AG04450 (cell line): ENCODE measurements at regions of chr11 and their contacts with region 1.

Region 1: DNA sequence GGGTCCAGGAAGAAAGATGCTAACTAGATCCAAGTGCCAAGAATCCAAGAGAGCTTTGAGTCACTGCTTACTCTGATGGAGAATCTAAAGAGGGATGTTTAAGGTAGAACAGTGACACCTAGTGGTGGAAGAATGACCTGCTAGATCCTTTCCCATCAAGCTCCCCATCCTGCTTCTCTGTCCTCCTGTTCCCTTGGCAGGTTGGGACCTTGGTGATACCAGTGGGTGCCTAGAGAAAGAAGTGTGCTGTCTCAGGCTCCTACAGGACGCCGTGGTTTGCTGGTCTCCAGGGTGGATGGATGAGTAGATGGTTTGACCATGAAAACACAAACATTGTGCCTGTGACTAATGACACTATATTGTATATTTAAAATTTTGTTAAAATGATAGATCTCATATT is 383.7 kb downstream of the TMEM135 start:
- DNase-seq: peak; percentile 66
- H3K4me3 ChIP-seq: no peak overlapping the region
- H3K27ac ChIP-seq: no peak overlapping the region
- H3K27me3 ChIP-seq: no peaks in the 10 kb centered on the region
- CTCF ChIP-seq: peak; percentile 76

Region 2: DNA sequence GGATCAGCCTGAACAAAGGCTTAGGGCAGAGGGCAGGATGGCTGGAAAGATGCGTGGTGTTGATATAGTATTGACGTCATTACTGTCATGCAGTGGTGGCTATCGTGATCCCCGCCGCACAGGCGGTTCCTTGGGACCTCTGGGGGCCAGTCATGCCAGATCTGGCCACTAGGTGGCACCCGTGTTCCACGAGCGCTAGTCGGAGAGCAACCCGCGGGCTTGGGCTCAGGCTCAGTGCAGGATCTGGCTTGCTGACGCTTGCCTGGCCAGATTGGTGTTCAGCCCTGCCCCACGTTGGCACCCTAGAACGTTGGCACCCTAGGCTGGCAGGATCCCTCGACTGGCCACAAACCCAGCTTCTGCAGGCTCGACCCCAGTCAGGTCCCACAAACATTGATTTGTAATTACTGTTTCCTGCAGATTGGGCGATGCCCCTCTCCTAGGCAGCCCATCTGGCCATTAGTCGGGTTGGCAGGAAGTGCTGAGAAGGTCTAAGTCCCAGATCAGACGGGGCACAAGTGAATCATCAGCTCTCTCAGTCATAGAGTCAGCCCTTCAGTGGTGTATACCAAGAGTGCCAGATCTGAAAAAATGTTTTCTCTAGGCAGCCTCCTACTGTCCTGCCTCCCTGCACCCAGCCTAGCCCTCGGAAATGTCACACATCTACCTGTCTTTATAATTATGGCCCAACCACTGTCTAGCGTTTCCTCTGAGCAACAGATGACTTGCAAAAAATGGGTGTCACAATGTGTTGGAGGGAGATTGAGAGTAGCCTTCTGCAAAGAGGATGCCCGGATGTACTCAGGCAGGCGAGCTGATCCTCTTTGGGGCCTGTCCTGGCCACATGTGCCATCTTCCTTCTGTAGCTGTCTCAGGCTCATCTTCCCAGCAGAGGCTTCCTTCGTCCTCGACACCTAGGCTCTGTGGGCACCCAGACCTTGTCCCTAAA is 68.4 kb before region 1 on chr11:
- CTCF ChIA-PET with region 1: interaction called, 106 read pairs
- POLR2A ChIA-PET with region 1: no interaction called
- DNase-seq: peak; percentile 32
- H3K4me3 ChIP-seq: no peak overlapping the region
- H3K27ac ChIP-seq: no peak overlapping the region
- H3K27me3 ChIP-seq: peaks cover 2% of the 10 kb centered on the region
- CTCF ChIP-seq: peak; percentile 99

Region 3: DNA sequence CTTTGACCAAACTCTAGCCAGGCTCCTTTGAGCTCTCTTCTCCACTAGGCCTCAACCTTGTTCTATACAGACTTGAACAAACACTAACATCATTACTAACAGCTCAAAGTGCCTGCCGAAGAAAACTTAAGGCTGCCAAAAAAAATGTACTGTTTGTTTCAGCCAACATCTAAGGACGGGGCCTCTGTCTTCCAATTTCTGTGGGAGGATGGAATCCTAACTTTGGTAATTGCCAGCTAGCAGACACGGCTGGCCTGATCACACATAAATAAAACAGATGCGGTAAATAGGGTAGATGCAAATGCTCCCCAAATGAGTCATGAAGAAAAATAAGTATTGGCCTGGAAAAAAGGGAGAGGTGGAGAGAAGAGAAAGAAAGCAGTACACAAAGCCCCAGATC is 10.6 kb after region 1 on chr11:
- CTCF ChIA-PET with region 1: interaction called, 32 read pairs
- POLR2A ChIA-PET with region 1: no interaction called
- DNase-seq: peak; percentile 55
- H3K4me3 ChIP-seq: no peak overlapping the region
- H3K27ac ChIP-seq: peak overlapping the region; percentile 49
- H3K27me3 ChIP-seq: no peaks in the 10 kb centered on the region
- CTCF ChIP-seq: no peak

Region 4: GRCh38 chr11:87451395-87451794 is 30.0 kb after region 1 on chr11:
- CTCF ChIA-PET with region 1: interaction called, 18 read pairs
- POLR2A ChIA-PET with region 1: no interaction called
- DNase-seq: no peak
- H3K4me3 ChIP-seq: no peak overlapping the region
- H3K27ac ChIP-seq: no peak overlapping the region
- H3K27me3 ChIP-seq: no peaks in the 10 kb centered on the region
- CTCF ChIP-seq: no peak

Region 5: GRCh38 chr11:87518266-87518665 is 96.8 kb after region 1 on chr11:
- CTCF ChIA-PET with region 1: no interaction called
- POLR2A ChIA-PET with region 1: no interaction called
- DNase-seq: no peak
- H3K4me3 ChIP-seq: no peak overlapping the region
- H3K27ac ChIP-seq: no peak overlapping the region
- H3K27me3 ChIP-seq: peaks cover 2% of the 10 kb centered on the region
- CTCF ChIP-seq: no peak

Region 6: GRCh38 chr11:87870086-87870485 is 448.7 kb after region 1 on chr11:
- CTCF ChIA-PET with region 1: no interaction called
- POLR2A ChIA-PET with region 1: no interaction called
- DNase-seq: no peak
- H3K4me3 ChIP-seq: no peak overlapping the region
- H3K27ac ChIP-seq: no peak overlapping the region
- H3K27me3 ChIP-seq: no peaks in the 10 kb centered on the region
- CTCF ChIP-seq: no peak